Adrenal gland (tissue), 19 donors: ENCODE measurements at regions of chr18 and their contacts with region 1.

Region 1: DNA sequence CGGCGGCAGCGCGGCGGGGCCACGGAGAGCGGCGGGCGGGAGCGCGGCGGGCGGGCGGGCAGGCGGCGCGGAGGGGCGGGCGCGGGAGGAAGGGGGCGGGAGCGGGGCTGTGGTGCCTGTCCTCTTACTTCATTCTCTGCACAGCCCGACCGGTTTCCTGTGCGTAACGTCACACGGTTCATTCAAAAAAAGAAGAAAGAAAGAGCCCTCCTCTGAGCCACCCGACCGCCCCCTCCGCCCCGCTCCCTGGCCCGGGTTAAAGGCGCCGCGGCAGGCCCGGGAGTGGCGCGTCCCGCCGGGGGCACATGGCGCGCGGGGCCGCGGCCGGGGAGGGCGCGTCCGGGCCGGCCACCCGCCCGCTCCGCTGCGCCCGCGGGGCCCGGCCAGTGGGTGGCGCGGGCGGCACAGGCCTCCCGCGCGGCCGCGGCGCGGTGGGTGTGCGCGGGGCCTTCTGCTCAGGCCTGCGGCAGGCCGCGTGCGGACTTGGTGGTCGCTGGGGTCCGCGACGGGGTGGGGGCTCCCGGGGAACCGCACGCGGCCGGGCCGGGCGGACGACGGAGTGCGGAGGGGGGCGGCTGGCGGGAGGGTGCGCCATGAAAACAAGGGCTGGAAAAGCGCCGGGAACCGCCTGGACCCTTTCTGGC is 599 bp upstream of the BCL2 start:
- DNase-seq: peak; percentile 70 to 87 (median 78)
- H3K4me3 ChIP-seq: peak overlapping the region in 2 of 4 donors; percentile 21 to 78
- H3K27ac ChIP-seq: peak overlapping the region in 3 of 5 donors; percentile 53 to 87 (median 65)
- H3K4me1 ChIP-seq: peaks cover 0 to 4% of the 10 kb centered on the region in 2 donors
- H3K27me3 ChIP-seq: peaks cover 5% of the 10 kb centered on the region
- CTCF ChIP-seq: peak in 1 of 6 experiments; percentile 45
- POLR2A ChIP-seq: peak in 1 of 2 donors; percentile 32

Region 2: DNA sequence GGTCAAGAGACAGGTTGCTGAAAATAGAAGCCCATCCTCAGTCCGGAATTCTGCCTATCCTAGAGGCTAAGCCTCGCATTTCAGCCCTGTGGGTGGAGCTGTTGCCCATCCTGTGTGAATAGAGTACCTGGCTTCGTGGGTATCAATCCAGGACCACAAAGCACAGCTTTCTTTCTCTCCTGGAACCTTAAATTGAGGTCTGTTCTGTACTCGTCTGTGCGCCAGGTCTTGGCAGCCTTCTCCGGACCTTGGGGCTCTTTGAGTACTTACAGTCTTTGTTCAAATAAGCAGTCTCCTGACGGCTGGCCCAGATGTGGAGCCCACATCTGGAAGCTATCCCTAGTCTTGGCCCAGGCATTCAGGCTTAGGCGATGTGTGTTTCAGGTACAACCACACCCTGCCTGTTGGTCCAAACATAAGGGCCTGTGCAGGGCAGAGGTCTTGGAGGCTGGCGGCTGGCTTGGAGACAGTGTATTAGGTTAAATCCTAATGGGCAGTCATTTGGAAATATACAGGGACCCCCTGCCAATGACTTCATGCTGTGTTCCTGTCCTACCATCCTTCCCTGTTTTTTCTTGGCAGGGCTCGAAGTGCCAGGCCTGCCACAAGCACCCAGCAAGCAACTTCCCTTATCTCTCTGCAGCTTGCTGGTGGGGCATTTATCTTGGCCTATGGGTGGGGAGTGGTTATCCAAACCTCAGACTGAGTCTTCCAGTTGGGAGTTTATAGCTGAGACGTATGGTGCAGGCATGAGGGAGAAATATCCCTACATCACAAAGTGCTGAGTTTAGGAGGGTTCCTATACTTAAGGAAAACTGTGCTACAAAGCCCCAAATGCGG is 294.7 kb before region 1 on chr18:
- intact Hi-C with region 1: loop called in 1 of 2 experiments (anchors 10 kb)
- DNase-seq: peak in 1 of 7 donors; percentile 60
- H3K4me3 ChIP-seq: no peak overlapping the region
- H3K27ac ChIP-seq: no peak overlapping the region
- H3K4me1 ChIP-seq: no peaks in the 10 kb centered on the region
- H3K27me3 ChIP-seq: no peaks in the 10 kb centered on the region
- CTCF ChIP-seq: peak in 2 of 6 experiments; percentile 10 to 13
- POLR2A ChIP-seq: no peak

Region 3: DNA sequence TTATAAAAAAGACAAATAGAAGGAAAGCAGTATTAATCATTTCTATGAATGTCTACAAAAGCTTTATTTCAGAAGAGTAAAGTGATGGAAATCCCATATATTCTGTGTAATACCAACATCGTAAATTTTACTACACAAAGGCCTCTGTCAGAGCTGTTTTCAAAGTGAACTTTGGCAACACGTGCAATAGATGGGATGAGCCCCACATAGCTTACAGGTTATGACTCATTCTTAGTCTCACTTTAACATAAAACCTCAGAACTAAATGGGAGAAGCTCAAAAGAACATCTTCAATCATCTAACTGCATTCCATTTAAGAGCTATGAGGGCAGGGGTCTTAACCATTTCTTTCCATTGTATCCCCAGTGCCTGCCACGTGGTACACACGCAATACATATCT is 90.6 kb after region 1 on chr18:
- intact Hi-C with region 1: no loop called
- DNase-seq: no peak
- H3K4me3 ChIP-seq: no peak overlapping the region
- H3K27ac ChIP-seq: no peak overlapping the region
- H3K4me1 ChIP-seq: peaks cover 0 to 7% of the 10 kb centered on the region in 2 donors
- H3K27me3 ChIP-seq: no peaks in the 10 kb centered on the region
- CTCF ChIP-seq: no peak
- POLR2A ChIP-seq: no peak